A673 (cell line): ENCODE measurements at regions of chr1 and their contacts with region 1.

Region 1: GRCh38 chr1:46527474-46528296 is 23.8 kb downstream of the KNCN start:
- DNase-seq: peak; percentile 83
- H3K4me3 ChIP-seq: no peak overlapping the region
- H3K27ac ChIP-seq: no peak overlapping the region
- H3K4me1 ChIP-seq: peaks cover 40% of the 10 kb centered on the region
- H3K27me3 ChIP-seq: peaks cover 18% of the 10 kb centered on the region
- CTCF ChIP-seq: peak; percentile 95

Region 2: DNA sequence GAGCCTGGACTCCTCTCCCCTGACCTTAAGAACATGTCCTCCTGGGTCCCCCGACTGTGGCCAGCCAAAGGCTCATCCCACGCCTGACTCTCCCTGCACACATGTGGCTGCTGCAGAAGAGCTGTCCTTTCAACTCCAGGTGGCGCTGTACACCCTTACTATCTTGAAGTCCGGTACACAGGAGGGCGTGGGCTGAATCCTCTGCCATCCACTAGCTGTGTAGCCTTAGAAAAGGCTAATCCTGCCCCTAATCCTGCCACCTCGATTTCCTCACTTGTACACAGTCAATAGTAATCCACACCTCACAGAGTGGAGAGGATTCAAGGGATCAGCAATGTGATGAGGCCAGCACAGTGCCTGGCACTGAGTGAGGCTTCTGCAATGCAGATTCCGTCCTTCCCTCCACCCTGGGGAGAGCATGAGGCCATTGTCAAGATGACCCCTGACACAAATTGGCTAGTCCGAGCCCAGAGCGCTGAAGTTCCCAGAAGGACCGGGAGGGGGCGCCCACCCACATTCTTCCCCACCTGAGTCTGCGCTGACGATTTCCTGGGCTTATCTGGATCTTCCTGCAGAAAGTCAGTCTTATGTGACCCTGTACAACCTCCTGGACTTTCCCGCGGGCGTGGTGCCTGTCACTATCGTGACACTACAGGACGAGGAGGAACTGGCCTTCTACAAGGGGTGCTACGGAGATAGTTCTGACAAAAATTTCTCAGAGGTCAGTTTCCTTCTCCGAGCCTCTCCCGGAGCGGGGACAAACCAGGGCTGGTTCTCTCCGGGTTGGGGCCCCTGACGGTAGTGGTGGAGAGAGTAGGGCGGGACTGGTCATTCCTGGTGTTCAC is 85.1 kb before region 1 on chr1:
- CTCF ChIA-PET with region 1: interaction called, 38 read pairs
- POLR2A ChIA-PET with region 1: no interaction called
- intact Hi-C with region 1: loop called (anchors 1 kb)
- DNase-seq: peak; percentile 92
- H3K4me3 ChIP-seq: no peak overlapping the region
- H3K27ac ChIP-seq: no peak overlapping the region
- H3K4me1 ChIP-seq: no peaks in the 10 kb centered on the region
- H3K27me3 ChIP-seq: peaks cover 6% of the 10 kb centered on the region
- CTCF ChIP-seq: peak; percentile 85

Region 3: GRCh38 chr1:46477153-46477929 is 50.3 kb before region 1 on chr1:
- CTCF ChIA-PET with region 1: interaction called, 3 read pairs
- POLR2A ChIA-PET with region 1: no interaction called
- intact Hi-C with region 1: loop called (anchors 1 kb)
- DNase-seq: peak; percentile 67
- H3K4me3 ChIP-seq: no peak overlapping the region
- H3K27ac ChIP-seq: no peak overlapping the region
- H3K4me1 ChIP-seq: no peaks in the 10 kb centered on the region
- H3K27me3 ChIP-seq: no peaks in the 10 kb centered on the region
- CTCF ChIP-seq: peak; percentile 72

Region 4: GRCh38 chr1:46489638-46490405 is 37.9 kb before region 1 on chr1 and contains the start of gene DMBX1:
- CTCF ChIA-PET with region 1: interaction called, 8 read pairs
- POLR2A ChIA-PET with region 1: no interaction called
- intact Hi-C with region 1: loop called (anchors 2 kb)
- DNase-seq: peak; percentile 69
- H3K4me3 ChIP-seq: peak within 1 kb of the TSS; percentile 61
- H3K27ac ChIP-seq: no peak within 1 kb of the TSS
- H3K4me1 ChIP-seq: peaks cover 13% of the 10 kb centered on the region
- H3K27me3 ChIP-seq: peaks cover 57% of the 10 kb centered on the region
- CTCF ChIP-seq: no peak
- total RNA-seq, gene DMBX1: 0.69 and 1.4 TPM in 2 replicates

Region 5: DNA sequence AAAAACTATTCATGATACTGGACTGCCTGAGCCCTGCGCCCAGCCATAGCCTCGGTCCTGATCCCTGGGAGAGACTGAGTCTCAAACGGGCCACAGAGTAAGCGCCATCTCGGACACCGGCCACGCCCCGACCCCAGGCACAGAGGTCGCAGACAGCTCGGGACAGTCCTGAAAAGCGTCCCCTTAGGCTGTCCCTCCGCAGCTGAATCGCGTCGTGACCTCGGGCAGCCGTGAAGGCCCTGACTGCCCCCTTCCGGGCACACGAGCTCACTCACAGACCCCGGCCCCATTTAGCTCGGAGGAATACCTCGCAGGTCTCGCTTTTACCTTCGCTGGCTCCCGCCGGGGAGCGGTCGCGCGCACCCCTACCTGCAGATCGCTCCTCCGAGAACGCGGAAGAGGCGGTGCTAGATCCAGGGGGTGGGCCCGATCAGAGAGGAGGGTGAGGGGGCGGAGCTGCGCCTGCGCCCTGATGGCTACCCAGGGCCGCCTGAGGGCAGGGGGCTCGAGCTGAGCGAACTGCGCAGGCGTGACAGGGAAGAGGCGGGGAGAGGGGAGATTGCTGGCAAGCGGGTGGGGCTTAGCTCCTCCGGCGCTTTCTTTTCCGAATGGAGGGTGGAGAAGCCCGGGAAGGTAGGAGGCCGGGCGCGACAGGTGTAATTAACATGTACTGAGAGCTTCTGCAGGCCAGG is 76.3 kb after region 1 on chr1 and contains the start of gene MKNK1:
- CTCF ChIA-PET with region 1: no interaction called
- POLR2A ChIA-PET with region 1: no interaction called
- intact Hi-C with region 1: no loop called
- DNase-seq: peak; percentile 96
- H3K4me3 ChIP-seq: peak within 1 kb of the TSS; percentile 95
- H3K27ac ChIP-seq: peak within 1 kb of the TSS; percentile 51
- H3K4me1 ChIP-seq: peaks cover 3% of the 10 kb centered on the region
- H3K27me3 ChIP-seq: no peaks in the 10 kb centered on the region
- CTCF ChIP-seq: no peak; the same call in 1 of the 2 replicates
- total RNA-seq, gene MKNK1: 22.7 and 32.0 TPM in 2 replicates

Region 6: GRCh38 chr1:46767649-46768282 is 240.1 kb after region 1 on chr1:
- CTCF ChIA-PET with region 1: no interaction called
- POLR2A ChIA-PET with region 1: no interaction called
- intact Hi-C with region 1: no loop called
- DNase-seq: no peak
- H3K4me3 ChIP-seq: no peak overlapping the region
- H3K27ac ChIP-seq: no peak overlapping the region
- H3K4me1 ChIP-seq: no peaks in the 10 kb centered on the region
- H3K27me3 ChIP-seq: peaks cover 39% of the 10 kb centered on the region
- CTCF ChIP-seq: no peak

Region 7: GRCh38 chr1:47809301-47810084 is 1281.8 kb after region 1 on chr1:
- CTCF ChIA-PET with region 1: no interaction called
- POLR2A ChIA-PET with region 1: no interaction called
- intact Hi-C with region 1: no loop called
- DNase-seq: no peak
- H3K4me3 ChIP-seq: no peak overlapping the region
- H3K27ac ChIP-seq: no peak overlapping the region
- H3K4me1 ChIP-seq: no peaks in the 10 kb centered on the region
- H3K27me3 ChIP-seq: no peaks in the 10 kb centered on the region
- CTCF ChIP-seq: no peak